ENCODE measurements at regions of chr15 and their contacts with region 1.

Region 1: GRCh38 chr15:29925227-29926082 is 103.2 kb upstream of the TJP1 start:
- DNase-seq: peak; percentile 71
- ATAC-seq: peak; percentile 74
- H3K4me3 ChIP-seq: peak overlapping the region in 1 of 2 experiments; percentile 20; a peak in 2 of 4 replicates
- H3K27ac ChIP-seq: peak overlapping the region; percentile 61; the same call in 1 of the 2 replicates
- H3K4me1 ChIP-seq: peaks cover 35 to 68% of the 10 kb centered on the region in 2 experiments
- H3K27me3 ChIP-seq: no peaks in the 10 kb centered on the region
- CTCF ChIP-seq: peak; percentile 96 to 99 (median 97)
- POLR2A ChIP-seq: peak; percentile 57
- RAD21 ChIP-seq: peak; percentile 82

Region 2: DNA sequence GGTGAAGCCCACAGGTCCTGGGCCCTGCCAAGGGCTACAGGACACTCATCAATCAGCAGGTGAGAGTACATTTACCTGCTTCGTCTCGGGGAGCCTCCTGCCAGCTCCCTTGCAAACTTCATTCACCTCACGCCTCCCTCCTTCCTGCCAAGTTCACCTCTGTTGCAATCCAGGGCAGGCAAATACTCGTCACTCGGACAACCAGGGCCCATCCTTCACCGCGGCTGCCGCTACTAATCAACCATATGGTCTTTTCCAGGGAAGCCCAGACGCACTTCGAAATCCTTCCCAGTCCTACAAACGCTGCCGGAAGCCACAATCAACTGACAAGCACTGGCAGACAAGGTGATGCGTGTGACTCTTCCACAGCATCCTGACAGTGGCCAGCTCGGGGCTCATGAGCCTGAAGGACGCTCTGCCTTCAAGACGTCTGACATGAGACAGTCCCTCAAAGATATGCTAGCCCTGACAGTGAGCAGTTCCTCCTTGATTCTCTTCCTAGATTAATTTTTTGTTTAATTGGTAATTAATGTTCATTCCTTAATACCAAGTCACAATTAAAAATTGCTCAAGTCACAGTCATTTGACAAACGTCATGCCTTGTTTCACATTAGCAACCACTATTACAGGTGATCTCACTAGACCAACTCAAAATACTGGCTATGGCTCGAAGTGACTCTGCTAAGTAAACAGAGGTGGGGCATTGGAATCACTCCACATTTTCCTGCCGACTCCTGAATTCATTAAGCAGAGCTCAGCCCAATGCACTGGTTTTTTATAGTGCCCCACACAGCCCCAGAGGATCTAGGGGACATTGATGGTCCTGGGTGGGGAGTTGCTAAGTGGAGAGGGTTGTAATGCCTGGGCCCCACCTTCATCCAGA is 454.9 kb before region 1 on chr15:
- CTCF ChIA-PET with region 1: no interaction called
- POLR2A ChIA-PET with region 1: no interaction called
- RAD21 ChIA-PET with region 1: no interaction called
- intact Hi-C with region 1: no loop called
- DNase-seq: no peak
- ATAC-seq: no peak
- H3K4me3 ChIP-seq: no peak overlapping the region
- H3K27ac ChIP-seq: no peak overlapping the region
- H3K4me1 ChIP-seq: peaks cover 0 to 5% of the 10 kb centered on the region in 2 experiments; a peak in 1 of 4 replicates
- H3K27me3 ChIP-seq: peaks cover 4% of the 10 kb centered on the region; the same call in 1 of the 2 replicates
- CTCF ChIP-seq: no peak
- POLR2A ChIP-seq: no peak
- RAD21 ChIP-seq: no peak

Region 3: GRCh38 chr15:29692527-29692926 is 232.9 kb before region 1 on chr15:
- CTCF ChIA-PET with region 1: interaction called, 28 read pairs
- POLR2A ChIA-PET with region 1: no interaction called
- RAD21 ChIA-PET with region 1: interaction called in 1 of 2 experiments, 3 read pairs
- intact Hi-C with region 1: loop called (anchors 10 kb)
- DNase-seq: no peak
- ATAC-seq: peak; percentile 55
- H3K4me3 ChIP-seq: no peak overlapping the region
- H3K27ac ChIP-seq: no peak overlapping the region
- H3K4me1 ChIP-seq: peaks cover 21 to 33% of the 10 kb centered on the region in 2 experiments
- H3K27me3 ChIP-seq: no peaks in the 10 kb centered on the region
- CTCF ChIP-seq: peak in 2 of 3 experiments; percentile 54 to 63; a peak in 4 of 6 replicates
- POLR2A ChIP-seq: no peak
- RAD21 ChIP-seq: peak; percentile 31; the same call in 1 of the 2 replicates

Region 4: GRCh38 chr15:29698030-29698701 is 227.3 kb before region 1 on chr15:
- CTCF ChIA-PET with region 1: interaction called, 28 read pairs
- POLR2A ChIA-PET with region 1: no interaction called
- RAD21 ChIA-PET with region 1: interaction called in 1 of 2 experiments, 3 read pairs
- intact Hi-C with region 1: loop called (anchors 10 kb)
- DNase-seq: peak; percentile 68
- ATAC-seq: peak; percentile 90
- H3K4me3 ChIP-seq: no peak overlapping the region
- H3K27ac ChIP-seq: no peak overlapping the region
- H3K4me1 ChIP-seq: peaks cover 18 to 36% of the 10 kb centered on the region in 2 experiments
- H3K27me3 ChIP-seq: no peaks in the 10 kb centered on the region
- CTCF ChIP-seq: no peak
- POLR2A ChIP-seq: no peak
- RAD21 ChIP-seq: peak; percentile 11; the same call in 1 of the 2 replicates

Region 5: DNA sequence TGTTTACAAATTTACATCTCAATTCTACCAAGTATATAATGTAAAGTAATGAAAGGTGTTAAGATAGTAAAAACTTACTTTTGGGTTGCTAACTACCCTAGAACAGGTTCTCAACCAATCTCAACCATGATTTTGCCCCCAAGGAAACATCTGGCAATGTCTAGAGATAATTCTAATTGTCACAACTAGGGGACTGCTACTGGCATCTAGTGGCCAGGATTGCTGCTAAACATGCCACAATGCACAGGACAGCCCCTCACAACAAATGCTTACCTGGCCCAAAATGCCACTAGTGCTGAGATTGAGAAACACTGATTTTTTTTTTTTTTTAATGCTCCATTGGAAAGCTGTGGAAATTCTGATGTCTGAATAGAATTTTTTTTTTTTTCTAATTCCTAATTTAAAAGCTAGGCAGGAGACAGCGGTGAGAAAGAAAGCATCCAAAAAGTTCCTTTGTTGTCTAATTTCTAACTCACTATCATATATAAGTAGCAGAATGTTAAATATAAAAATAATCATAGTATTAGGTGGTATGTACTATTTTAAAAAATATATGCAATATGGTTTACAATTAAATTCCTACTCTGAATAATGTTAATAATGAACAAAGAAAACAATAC is 184.7 kb before region 1 on chr15:
- CTCF ChIA-PET with region 1: interaction called, 180 read pairs
- POLR2A ChIA-PET with region 1: interaction called, 4 read pairs
- RAD21 ChIA-PET with region 1: interaction called, 4 to 5 read pairs
- intact Hi-C with region 1: loop called (anchors 2 kb)
- DNase-seq: no peak
- ATAC-seq: peak; percentile 35
- H3K4me3 ChIP-seq: no peak overlapping the region
- H3K27ac ChIP-seq: no peak overlapping the region
- H3K4me1 ChIP-seq: peaks cover 21 to 35% of the 10 kb centered on the region in 2 experiments
- H3K27me3 ChIP-seq: no peaks in the 10 kb centered on the region
- CTCF ChIP-seq: peak; percentile 32 to 59 (median 54); a peak in 5 of 6 replicates
- POLR2A ChIP-seq: no peak
- RAD21 ChIP-seq: peak; percentile 42; the same call in 1 of the 2 replicates

Region 6: DNA sequence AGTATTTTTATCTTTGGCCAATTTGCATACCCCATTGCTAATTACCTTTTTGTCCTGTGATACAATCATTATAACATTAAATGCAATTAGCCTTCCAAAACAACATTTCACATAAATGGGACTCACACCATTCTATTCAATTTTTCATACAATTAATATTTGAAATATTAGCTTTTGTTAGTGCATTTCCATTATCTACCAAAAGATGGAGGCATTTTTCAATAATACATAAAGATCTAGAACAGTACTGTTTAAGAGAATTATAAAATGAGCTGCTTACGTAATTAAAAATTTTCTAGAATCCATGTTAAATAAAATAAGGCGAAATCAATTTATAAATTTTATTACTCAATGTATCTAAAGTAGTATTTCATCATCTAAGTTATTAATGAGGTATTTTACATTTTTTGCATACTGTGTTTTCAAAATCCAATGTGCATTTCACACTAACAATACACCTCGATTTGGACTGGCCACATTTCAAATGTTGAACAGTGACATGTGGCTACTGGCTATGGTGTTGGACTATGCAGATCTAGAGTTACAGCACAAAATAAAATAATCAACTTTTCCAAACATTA is 177.5 kb before region 1 on chr15:
- CTCF ChIA-PET with region 1: interaction called, 180 read pairs
- POLR2A ChIA-PET with region 1: interaction called, 12 read pairs
- RAD21 ChIA-PET with region 1: interaction called, 5 to 19 read pairs
- intact Hi-C with region 1: no loop called
- DNase-seq: peak; percentile 8
- ATAC-seq: no peak
- H3K4me3 ChIP-seq: no peak overlapping the region
- H3K27ac ChIP-seq: no peak overlapping the region
- H3K4me1 ChIP-seq: no peaks in the 10 kb centered on the region
- H3K27me3 ChIP-seq: no peaks in the 10 kb centered on the region
- CTCF ChIP-seq: peak; percentile 25 to 57 (median 56); a peak in 3 of 6 replicates
- POLR2A ChIP-seq: no peak
- RAD21 ChIP-seq: peak; percentile 53

Region 7: GRCh38 chr15:29765898-29766527 is 159.4 kb before region 1 on chr15:
- CTCF ChIA-PET with region 1: no interaction called
- POLR2A ChIA-PET with region 1: no interaction called
- RAD21 ChIA-PET with region 1: no interaction called
- intact Hi-C with region 1: no loop called
- DNase-seq: no peak
- ATAC-seq: no peak
- H3K4me3 ChIP-seq: no peak overlapping the region
- H3K27ac ChIP-seq: no peak overlapping the region
- H3K4me1 ChIP-seq: no peaks in the 10 kb centered on the region
- H3K27me3 ChIP-seq: no peaks in the 10 kb centered on the region
- CTCF ChIP-seq: no peak
- POLR2A ChIP-seq: no peak
- RAD21 ChIP-seq: no peak

Region 8: DNA sequence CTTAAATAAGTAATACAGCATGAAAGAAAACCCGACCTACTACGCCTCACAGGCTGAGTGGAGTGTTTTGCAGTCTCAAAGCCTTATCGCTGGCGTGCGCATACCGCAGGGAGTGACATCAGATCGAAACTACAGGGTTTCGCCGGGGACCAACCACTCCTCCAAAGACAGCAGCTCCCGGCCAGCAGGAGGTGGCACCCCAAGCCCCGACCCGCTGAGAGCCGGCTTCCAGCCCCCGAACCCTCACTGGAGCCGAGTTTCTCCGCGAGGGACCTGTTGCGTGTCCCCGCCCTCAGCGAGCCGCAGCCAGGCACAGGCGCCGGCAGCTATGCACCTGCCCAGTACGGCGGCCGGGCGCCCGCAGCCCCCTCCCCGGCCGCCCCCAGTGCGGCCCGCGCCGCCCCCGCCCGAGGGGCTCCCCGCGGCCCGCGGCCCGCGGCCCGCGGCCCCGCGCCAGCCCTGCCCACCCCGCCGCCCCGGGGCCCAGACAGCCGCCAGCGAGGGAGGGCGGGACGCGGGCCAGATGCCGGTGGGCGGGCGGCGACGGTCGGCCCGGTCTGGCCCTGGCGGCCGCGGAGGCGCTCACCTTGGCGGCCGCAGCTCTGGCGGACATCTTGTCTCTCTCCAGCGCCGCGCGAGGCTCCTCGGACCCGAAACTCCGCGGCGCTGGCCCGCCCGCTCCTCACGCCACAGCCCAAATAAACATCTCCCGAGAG is 103.9 kb before region 1 on chr15:
- CTCF ChIA-PET with region 1: interaction called, 5 read pairs
- POLR2A ChIA-PET with region 1: interaction called, 12 read pairs
- RAD21 ChIA-PET with region 1: interaction called, 3 read pairs
- intact Hi-C with region 1: loop called (anchors 2 kb)
- DNase-seq: peak; percentile 70
- ATAC-seq: peak; percentile 66
- H3K4me3 ChIP-seq: peak overlapping the region; percentile 63 to 79
- H3K27ac ChIP-seq: peak overlapping the region; percentile 93
- H3K4me1 ChIP-seq: peaks cover 16 to 31% of the 10 kb centered on the region in 2 experiments
- H3K27me3 ChIP-seq: no peaks in the 10 kb centered on the region
- CTCF ChIP-seq: peak in 1 of 3 experiments; percentile 12; a peak in 2 of 6 replicates
- POLR2A ChIP-seq: no peak
- RAD21 ChIP-seq: no peak

Region 9: GRCh38 chr15:29942143-29942542 is 16.7 kb after region 1 on chr15:
- CTCF ChIA-PET with region 1: interaction called, 37 read pairs
- POLR2A ChIA-PET with region 1: interaction called, 3 read pairs
- RAD21 ChIA-PET with region 1: no interaction called
- intact Hi-C with region 1: no loop called
- DNase-seq: no peak
- ATAC-seq: peak; percentile 68
- H3K4me3 ChIP-seq: no peak overlapping the region
- H3K27ac ChIP-seq: no peak overlapping the region
- H3K4me1 ChIP-seq: peaks cover 0 to 20% of the 10 kb centered on the region in 2 experiments; a peak in 2 of 4 replicates
- H3K27me3 ChIP-seq: no peaks in the 10 kb centered on the region
- CTCF ChIP-seq: peak; percentile 8 to 41 (median 35); a peak in 5 of 6 replicates
- POLR2A ChIP-seq: no peak
- RAD21 ChIP-seq: peak; percentile 28; the same call in 1 of the 2 replicates